Naive thymus-derived CD4-positive, alpha-beta T cell (primary cell): ENCODE measurements at regions of chr6 and their contacts with region 1.

Region 1: DNA sequence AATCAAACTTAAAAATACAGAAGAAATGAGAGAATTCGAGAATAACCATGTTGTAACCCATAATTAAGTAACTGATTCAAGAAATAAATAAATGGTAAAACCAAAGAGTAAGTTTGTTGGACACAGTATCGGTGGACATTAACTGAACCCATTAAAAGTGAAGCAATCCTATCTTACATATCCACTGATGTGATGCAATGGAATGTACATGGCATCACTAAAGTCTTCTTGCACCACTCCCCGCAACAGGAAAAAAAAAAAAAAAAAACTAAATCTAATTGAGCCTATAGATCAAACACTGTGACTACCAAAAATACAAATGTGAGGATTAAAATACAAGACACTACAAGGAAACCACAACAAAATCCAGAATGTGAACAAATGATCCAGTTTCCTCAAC is 7.9 kb downstream of the SNX14 start:
- DNase-seq: no peak
- ATAC-seq: no peak
- H3K4me3 ChIP-seq: no peak overlapping the region
- H3K4me3 Mint-ChIP-seq: peak overlapping the region in 3 of 10 donors; percentile 8 to 37 (median 22)
- H3K27ac ChIP-seq: no peak overlapping the region
- H3K27ac Mint-ChIP-seq: no peak overlapping the region
- H3K4me1 ChIP-seq: peaks cover 0 to 4% of the 10 kb centered on the region in 2 donors
- H3K4me1 Mint-ChIP-seq: peaks cover 11 to 78% (median 59%) of the 10 kb centered on the region in 7 donors
- H3K27me3 ChIP-seq: no peaks in the 10 kb centered on the region
- H3K27me3 Mint-ChIP-seq: no peaks in the 10 kb centered on the region

Region 2: DNA sequence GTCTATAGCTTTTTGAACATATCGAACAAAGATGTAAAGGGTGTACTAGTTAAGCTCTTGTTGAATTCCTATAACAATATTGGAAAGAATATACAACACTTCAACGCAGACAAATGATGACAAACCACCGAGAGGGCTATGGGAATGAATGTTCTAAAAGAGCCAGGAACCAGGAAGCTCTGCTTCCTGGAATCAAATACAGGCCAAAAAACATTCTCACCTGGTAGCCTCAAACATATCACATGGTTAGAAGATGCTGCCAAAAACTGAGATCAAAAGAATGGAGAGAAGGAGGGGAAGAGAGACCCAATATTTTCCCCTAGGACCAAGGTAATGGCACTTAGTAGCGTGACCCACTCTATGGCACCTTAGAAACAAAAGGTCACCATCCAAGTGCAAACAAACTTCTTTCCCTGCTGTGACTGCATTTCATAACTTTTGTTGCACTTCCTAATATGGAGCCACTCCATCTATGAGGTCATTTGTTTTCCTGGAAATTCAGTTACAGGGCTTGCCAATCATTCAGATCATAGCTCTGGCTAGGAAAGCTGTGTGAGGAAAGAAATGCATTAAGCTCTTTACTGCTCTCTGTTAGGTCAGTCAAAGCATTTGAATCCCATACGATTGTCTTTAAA is 335.0 kb before region 1 on chr6:
- CTCF ChIA-PET with region 1: no interaction called
- POLR2A ChIA-PET with region 1: no interaction called
- intact Hi-C with region 1: no loop called
- DNase-seq: no peak
- ATAC-seq: no peak
- H3K4me3 ChIP-seq: no peak overlapping the region
- H3K4me3 Mint-ChIP-seq: no peak overlapping the region
- H3K27ac ChIP-seq: no peak overlapping the region
- H3K27ac Mint-ChIP-seq: no peak overlapping the region
- H3K4me1 ChIP-seq: no peaks in the 10 kb centered on the region
- H3K4me1 Mint-ChIP-seq: no peaks in the 10 kb centered on the region
- H3K27me3 ChIP-seq: no peaks in the 10 kb centered on the region
- H3K27me3 Mint-ChIP-seq: peaks cover 0 to 8% (median 7%) of the 10 kb centered on the region in 5 donors

Region 3: GRCh38 chr6:85574932-85575598 is 10.7 kb before region 1 on chr6:
- CTCF ChIA-PET with region 1: no interaction called
- POLR2A ChIA-PET with region 1: interaction called, 11 read pairs
- intact Hi-C with region 1: no loop called
- DNase-seq: no peak
- ATAC-seq: no peak
- H3K4me3 ChIP-seq: no peak overlapping the region
- H3K4me3 Mint-ChIP-seq: peak overlapping the region in 1 of 10 donors; percentile 23
- H3K27ac ChIP-seq: no peak overlapping the region
- H3K27ac Mint-ChIP-seq: peak overlapping the region in 2 of 9 donors; percentile 11 to 53
- H3K4me1 ChIP-seq: no peaks in the 10 kb centered on the region
- H3K4me1 Mint-ChIP-seq: peaks cover 0 to 20% (median 9%) of the 10 kb centered on the region in 7 donors
- H3K27me3 ChIP-seq: no peaks in the 10 kb centered on the region
- H3K27me3 Mint-ChIP-seq: no peaks in the 10 kb centered on the region

Region 4: DNA sequence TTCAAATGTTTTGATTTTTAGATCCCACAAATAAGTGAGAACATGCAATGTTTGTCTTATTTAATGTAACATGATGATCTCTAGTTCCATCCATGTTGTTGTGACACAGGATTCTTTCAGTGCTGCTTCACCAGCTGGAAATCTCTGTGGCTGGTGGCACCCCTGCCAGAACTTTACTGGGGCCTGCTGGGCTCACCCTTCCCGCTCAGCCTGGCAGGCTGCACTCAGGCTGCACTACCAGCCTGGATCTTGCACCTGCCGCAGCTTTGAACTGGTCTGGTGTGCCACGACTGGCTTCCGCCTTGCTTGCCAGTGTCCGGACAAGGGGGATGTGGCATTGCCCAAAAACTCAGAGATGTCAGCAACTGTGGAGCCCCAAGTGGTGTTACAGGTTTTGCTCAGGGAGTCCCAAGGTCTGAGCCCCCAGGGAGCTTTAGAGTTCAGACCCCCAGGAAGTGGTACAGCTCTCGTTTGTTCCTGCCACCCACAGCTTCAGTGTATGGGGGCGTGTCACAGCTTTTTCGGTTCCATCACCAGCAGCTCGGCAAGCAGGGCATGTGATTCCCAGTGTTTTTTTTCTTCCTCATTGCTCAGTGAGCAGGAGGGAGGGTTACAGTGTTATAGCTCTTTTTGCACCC is 129.3 kb after region 1 on chr6:
- CTCF ChIA-PET with region 1: no interaction called
- POLR2A ChIA-PET with region 1: no interaction called
- intact Hi-C with region 1: no loop called
- DNase-seq: no peak
- ATAC-seq: no peak
- H3K4me3 ChIP-seq: no peak overlapping the region
- H3K4me3 Mint-ChIP-seq: no peak overlapping the region
- H3K27ac ChIP-seq: no peak overlapping the region
- H3K27ac Mint-ChIP-seq: no peak overlapping the region
- H3K4me1 ChIP-seq: no peaks in the 10 kb centered on the region
- H3K4me1 Mint-ChIP-seq: no peaks in the 10 kb centered on the region
- H3K27me3 ChIP-seq: no peaks in the 10 kb centered on the region
- H3K27me3 Mint-ChIP-seq: peaks cover 0 to 12% (median 5%) of the 10 kb centered on the region in 5 donors

Region 5: GRCh38 chr6:85911067-85911466 is 325.3 kb after region 1 on chr6:
- CTCF ChIA-PET with region 1: no interaction called
- POLR2A ChIA-PET with region 1: no interaction called
- intact Hi-C with region 1: no loop called
- DNase-seq: no peak
- ATAC-seq: no peak
- H3K4me3 ChIP-seq: no peak overlapping the region
- H3K4me3 Mint-ChIP-seq: no peak overlapping the region
- H3K27ac ChIP-seq: no peak overlapping the region
- H3K27ac Mint-ChIP-seq: no peak overlapping the region
- H3K4me1 ChIP-seq: no peaks in the 10 kb centered on the region
- H3K4me1 Mint-ChIP-seq: no peaks in the 10 kb centered on the region
- H3K27me3 ChIP-seq: no peaks in the 10 kb centered on the region
- H3K27me3 Mint-ChIP-seq: peaks cover 0 to 27% (median 11%) of the 10 kb centered on the region in 5 donors